GM13976 (cell line): ENCODE measurements at regions of chr3 and their contacts with region 1.

Region 1: DNA sequence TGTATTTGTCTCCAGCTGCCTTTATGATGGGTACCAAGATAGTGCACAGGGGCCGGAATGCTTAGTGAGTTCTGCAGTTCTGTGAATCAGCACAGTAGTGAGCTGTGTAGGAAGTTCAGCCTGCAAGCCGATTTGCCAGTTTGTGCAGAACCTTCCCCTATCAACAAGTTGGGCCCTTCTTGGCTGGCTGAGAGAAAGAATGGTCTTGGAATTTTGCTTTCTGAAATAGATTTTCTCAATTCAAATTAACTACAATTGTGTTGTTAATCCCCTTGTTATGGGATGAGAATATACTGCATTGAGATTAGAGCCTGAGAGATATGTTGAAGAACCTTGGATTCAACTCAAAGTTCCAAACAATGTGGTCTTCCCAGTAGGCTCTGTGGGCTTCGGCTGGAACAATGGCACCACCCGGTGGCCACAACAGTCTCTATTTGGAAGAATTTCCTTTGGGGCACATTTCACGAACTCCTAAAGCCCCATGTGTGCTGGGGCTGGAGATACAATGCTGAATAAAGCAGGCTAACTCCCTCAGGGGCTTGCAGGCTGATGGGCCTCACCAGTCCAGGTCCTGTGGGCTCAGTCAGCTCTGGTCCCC is 59.1 kb downstream of the TRIM42 start:
- DNase-seq: peak; percentile 26
- CTCF ChIP-seq: peak; percentile 26

Region 2: GRCh38 chr3:140128631-140129030 is 608.3 kb before region 1 on chr3:
- in situ Hi-C with region 1: loop called (anchors 25 kb)
- DNase-seq: peak; percentile 13
- CTCF ChIP-seq: peak; percentile 65

Region 3: DNA sequence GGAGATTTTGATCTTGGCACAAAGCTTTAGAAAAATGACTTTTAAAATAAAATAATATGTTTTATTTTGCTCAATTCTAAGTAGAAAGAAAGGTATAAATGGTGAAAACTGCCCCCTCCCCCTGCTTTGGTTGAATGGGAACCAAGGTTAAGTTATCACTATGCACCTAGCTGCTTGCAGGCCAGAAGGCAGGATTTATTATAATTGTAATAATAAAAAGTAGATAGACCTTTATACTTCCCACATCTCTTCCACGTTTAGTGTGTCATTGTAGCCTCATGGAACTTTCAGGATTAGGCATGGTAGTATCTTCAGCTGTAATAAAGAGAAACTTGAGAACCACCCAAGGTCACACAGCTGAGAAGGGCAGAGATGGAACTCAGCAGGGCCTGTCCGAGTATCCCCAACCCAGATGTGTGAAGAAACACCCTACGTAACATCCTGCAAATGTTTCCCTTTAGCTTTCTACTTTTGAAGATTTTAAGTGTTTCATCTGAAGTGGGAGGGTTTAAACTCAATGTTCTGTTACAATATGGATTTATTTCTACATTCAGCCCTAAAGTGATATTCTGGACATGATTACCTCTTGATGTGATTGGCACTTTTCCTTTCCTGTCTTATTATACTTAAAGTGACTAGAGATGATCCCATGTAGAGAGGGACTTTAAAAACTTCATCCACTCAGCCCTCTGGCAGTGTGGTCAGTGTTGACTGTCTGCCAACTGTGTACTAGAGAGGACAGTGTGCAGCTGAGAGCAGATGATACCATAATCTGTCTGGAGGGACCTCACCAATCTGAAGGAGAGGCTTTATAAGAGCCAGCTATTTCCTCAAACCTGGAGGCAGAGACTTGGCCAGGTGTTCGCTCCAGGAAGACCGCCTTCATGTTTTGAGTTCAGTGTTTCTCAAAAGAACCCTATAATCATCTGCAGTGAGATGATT is 341.6 kb before region 1 on chr3:
- in situ Hi-C with region 1: no loop called
- DNase-seq: no peak
- CTCF ChIP-seq: no peak